PC-9 (cell line): ENCODE measurements at regions of chr22 and their contacts with region 1.

Region 1: DNA sequence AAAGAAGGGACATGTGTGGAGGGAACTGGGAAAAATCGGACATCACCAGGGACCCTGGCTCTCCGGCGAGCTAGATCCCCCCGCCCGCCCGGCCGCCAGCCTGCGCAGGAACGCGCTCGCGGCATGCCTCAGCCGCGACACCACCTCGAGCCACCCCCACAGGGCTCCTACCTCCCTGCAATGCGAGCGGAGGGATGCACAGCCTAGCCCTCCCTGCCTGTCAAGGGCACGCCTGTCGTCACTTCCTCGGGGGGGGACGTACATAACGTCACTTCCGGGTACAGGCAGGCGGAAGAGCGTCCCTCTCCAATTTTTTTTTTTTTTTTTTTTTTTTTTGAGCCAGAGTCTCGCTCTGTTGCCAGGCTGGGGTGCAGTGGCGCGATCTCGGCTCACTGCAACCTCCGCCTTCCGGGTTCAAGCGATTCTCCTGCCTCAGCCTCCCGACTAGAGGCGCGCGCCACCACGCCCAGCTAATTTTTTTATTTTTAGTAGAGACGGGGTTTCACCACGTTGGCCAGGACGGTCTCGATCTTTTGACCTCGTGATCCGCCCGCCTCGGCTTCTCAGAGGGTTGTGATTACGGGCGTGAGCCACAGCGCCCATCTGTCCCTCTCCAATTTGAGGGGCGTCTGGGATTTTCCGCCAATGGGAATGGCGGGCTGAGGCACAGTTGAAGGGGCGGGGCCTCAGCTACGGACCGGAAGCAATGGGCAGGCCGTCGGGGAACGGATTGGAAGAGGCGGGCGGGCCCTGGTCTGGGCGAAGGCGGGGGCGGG is at the start of gene TXN2:
- DNase-seq: peak; percentile 90 to 95
- H3K4me3 ChIP-seq: peak within 1 kb of the TSS; percentile 70
- H3K27ac ChIP-seq: peak within 1 kb of the TSS; percentile 95
- H3K4me1 ChIP-seq: peaks cover 38% of the 10 kb centered on the region
- H3K27me3 ChIP-seq: no peaks in the 10 kb centered on the region
- CTCF ChIP-seq: no peak
- total RNA-seq, gene TXN2: 89.0 and 95.1 TPM in 2 replicates

Region 2: DNA sequence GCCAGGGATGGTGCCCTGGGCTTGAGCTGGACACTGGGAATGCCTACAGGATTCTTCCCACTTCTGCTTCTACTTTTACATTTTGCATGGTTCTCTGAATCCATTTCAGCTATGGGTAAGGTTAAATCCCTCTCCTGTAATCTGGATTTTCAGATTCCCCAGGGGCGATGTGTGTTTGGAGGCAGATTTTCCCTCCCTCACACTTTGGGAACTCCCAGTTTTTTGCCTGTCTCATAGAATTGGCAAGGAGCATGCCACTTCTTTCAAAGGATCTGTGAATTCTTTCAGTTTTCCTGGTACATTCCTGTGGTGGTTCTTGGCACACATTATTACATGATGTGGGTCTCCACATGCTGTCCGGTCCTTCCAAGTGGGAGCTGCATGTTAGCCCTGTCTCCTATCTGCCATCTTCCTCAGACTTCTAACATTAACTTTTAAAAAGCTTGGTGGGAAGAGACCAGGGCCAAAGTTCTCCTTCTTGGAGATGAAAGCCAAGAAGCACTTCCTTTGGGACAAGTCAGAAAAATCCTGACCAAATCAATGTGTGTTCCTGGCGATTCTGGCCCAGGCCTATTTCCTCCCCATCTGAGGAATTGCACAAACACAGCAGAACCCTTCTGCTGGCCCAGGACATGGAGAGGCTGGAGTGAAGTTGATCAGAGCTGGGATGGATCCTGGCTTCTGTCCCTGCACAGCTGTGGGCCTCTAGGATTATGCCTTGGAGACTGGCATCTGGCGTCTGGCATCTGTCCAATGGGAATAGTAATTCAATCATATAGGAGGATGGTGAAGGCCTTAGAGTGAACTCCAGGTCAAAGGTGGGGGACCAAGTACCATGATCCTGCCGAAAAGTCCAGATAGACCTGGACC is 236.8 kb before region 1 on chr22:
- CTCF ChIA-PET with region 1: no interaction called
- POLR2A ChIA-PET with region 1: no interaction called
- intact Hi-C with region 1: no loop called
- DNase-seq: no peak
- H3K4me3 ChIP-seq: no peak overlapping the region
- H3K27ac ChIP-seq: no peak overlapping the region
- H3K4me1 ChIP-seq: peaks cover 3% of the 10 kb centered on the region; the same call in 1 of the 2 replicates
- H3K27me3 ChIP-seq: no peaks in the 10 kb centered on the region
- CTCF ChIP-seq: no peak

Region 3: GRCh38 chr22:36311386-36312358 is 169.9 kb before region 1 on chr22:
- CTCF ChIA-PET with region 1: interaction called, 6 read pairs
- POLR2A ChIA-PET with region 1: interaction called, 12 read pairs
- intact Hi-C with region 1: no loop called
- DNase-seq: peak; percentile 72 to 78
- H3K4me3 ChIP-seq: no peak overlapping the region
- H3K27ac ChIP-seq: no peak overlapping the region
- H3K4me1 ChIP-seq: 0 out of 2 replicates have a peak, but pooled peaks cover 9% of the 10 kb centered on the region
- H3K27me3 ChIP-seq: no peaks in the 10 kb centered on the region
- CTCF ChIP-seq: no peak

Region 4: DNA sequence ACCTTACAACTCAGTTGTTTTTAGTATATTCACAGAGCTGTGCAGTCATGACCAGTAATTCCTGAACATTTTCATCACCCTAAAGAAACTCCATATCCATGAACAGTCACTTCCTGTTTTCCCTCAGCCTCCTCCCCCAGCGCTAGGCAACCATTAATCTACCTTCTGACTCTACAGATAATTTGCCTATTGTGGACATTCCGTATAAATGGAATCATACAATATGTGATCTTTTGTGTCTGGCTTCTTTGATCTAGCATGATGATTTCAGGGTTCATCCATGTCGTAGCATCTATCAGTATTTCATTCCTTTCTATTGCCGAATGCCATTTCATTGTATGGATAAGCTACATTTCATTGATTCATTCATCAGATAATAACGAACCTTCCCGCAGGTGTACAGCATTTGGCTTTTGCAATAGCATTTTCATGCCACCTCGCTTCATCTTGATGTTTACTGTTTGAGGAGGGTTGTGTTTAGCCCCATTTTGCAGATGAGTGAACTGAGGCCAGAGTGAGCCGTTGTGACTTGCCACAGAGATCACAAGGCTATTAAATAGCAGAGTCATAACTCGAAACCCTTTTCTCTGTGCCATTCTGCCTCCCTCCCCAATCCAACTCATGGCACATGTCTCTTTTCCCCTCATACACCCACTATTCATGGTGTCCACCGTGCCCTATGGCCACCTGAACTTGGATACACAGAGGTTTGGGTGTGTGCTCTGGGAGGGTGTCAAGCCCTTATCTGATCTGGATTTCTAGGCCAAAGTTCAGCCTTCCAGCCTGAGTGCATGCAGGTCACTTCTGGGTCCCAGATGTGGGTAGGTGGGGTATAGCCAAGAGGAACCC is 82.7 kb before region 1 on chr22:
- CTCF ChIA-PET with region 1: no interaction called
- POLR2A ChIA-PET with region 1: interaction called, 15 read pairs
- intact Hi-C with region 1: no loop called
- DNase-seq: peak; percentile 45 to 91
- H3K4me3 ChIP-seq: no peak overlapping the region
- H3K27ac ChIP-seq: peak overlapping the region; percentile 78
- H3K4me1 ChIP-seq: peaks cover 76% of the 10 kb centered on the region
- H3K27me3 ChIP-seq: no peaks in the 10 kb centered on the region
- CTCF ChIP-seq: no peak

Region 5: DNA sequence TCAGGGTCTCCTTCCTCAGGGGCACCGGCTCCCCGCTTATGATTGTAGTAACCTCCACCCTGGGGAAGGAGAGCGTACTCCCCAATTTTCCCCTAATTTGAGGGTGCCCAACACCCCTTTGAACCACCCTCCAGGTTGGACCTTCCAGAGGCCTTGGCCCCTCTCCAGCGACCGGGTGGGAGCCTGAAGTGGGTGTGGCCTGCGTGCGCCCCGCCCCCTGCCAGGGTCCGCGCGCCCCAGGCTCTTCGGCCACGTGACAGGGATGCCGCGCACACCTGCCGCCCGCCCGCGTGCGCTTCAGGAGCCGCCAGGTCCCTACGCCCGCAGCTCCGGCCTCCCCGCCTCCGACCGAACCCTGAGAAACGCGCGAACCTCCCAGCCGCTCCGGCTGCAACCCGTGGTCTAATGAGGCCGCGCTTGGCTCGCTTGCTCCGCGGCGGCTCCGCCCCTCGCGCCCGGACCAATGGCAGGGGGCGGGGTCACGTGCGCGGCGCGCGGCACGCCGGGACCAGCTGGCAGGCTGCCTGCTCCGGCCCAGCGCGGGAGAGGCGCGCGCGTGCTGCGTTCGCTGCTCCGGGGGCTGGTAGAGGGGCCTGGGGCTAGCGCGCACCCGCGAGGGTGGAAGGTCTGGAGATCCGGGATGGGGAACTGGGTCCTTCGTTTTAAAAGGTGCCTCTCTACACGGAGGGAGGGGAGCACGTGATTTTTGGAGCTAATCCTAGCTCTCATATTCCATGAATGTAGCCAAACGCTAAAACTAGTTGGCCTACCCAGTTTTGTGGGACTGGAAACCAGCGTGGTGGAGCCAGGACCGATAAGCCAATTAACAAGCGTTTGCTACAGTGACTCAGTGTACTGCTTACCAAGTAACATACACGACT is 25.3 kb after region 1 on chr22 and contains the start of gene FOXRED2:
- CTCF ChIA-PET with region 1: no interaction called
- POLR2A ChIA-PET with region 1: interaction called, 26 read pairs
- intact Hi-C with region 1: no loop called
- DNase-seq: peak; percentile 68 to 91
- H3K4me3 ChIP-seq: peak within 1 kb of the TSS; percentile 61
- H3K27ac ChIP-seq: peak within 1 kb of the TSS; percentile 10
- H3K4me1 ChIP-seq: peaks cover 15% of the 10 kb centered on the region
- H3K27me3 ChIP-seq: no peaks in the 10 kb centered on the region
- CTCF ChIP-seq: no peak
- total RNA-seq, gene FOXRED2: 42.1 and 42.4 TPM in 2 replicates

Region 6: DNA sequence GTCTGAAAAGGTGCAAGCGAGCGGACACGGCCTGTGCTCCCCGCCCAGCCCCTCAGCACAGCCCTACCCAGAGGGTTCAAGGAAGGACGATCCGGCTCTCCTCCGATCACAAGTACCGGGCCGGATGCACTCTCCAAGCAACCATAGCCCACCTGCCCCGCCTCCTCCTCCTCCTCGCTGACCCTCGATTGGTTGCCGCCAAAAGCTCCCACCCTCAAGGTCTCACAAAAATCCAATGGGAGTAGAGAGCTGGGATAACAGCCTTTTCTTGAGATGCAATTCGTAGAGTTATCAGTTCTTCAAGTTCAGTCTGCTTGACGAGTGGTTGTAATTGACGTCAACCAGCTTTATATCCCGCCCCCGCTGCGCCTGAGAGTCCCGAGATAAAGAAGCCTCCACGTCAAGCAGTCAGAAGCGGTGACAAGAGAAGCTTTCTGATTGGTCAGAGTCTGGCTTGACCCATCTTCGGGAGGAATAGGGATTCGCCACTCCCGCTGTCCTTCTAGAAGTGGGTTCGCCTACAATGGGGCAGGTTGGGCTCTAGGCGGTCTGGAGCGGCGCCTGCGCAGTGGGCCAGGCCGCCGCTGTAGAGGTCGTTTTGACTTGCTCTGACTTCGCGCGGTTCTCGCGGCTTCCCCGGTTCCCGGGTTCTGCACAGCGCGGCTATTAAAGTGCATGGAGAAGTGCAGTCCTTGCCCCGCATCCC is 294.5 kb after region 1 on chr22 and contains the start of gene IFT27:
- CTCF ChIA-PET with region 1: no interaction called
- POLR2A ChIA-PET with region 1: interaction called, 10 read pairs
- intact Hi-C with region 1: no loop called
- DNase-seq: peak; percentile 99 to 100
- H3K4me3 ChIP-seq: peak within 1 kb of the TSS; percentile 76
- H3K27ac ChIP-seq: no peak within 1 kb of the TSS
- H3K4me1 ChIP-seq: peaks cover 13% of the 10 kb centered on the region
- H3K27me3 ChIP-seq: no peaks in the 10 kb centered on the region
- CTCF ChIP-seq: no peak
- total RNA-seq, gene IFT27: 74.2 and 84.2 TPM in 2 replicates

Region 7: GRCh38 chr22:37051391-37052385 is 570.1 kb after region 1 on chr22 and contains the start of gene KCTD17:
- CTCF ChIA-PET with region 1: no interaction called
- POLR2A ChIA-PET with region 1: no interaction called
- intact Hi-C with region 1: no loop called
- DNase-seq: peak in 1 of 2 experiments; percentile 73
- H3K4me3 ChIP-seq: peak within 1 kb of the TSS; percentile 87
- H3K27ac ChIP-seq: no peak within 1 kb of the TSS
- H3K4me1 ChIP-seq: peaks cover 7% of the 10 kb centered on the region; the same call in 1 of the 2 replicates
- H3K27me3 ChIP-seq: no peaks in the 10 kb centered on the region
- CTCF ChIP-seq: no peak
- total RNA-seq, gene KCTD17: 29.5 and 32.6 TPM in 2 replicates